OCI-LY7 (cell line): ENCODE measurements at regions of chr4 and their contacts with region 1.

Region 1: DNA sequence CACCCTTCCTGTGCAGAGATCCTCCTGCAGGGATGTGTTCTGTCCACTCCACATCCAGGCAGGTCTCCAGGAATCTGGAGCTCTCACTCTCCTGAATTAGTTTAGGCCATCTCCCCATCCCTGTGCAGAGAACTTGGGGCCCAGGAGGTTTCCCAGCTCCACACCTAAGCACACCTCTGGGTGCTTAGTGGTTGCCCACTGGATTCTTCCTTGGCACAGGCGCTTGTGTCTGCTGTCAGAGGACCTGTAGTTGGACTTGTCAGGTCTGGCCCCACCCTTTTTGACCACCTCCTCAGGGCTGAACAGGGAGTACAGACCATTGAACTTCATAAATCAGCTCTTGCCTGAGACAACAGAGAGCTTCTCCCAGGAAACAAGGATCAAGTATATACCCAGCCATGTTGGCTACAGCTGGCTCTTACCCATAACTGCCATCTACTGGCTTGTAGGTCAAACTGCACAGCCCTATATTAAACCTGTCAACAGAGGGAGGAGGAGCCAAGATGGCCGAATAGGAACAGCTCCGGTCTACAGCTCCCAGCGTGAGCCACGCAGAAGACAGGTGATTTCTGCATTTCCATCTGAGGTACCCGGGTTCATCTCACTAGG is 275.5 kb downstream of the PPARGC1A start:
- DNase-seq: peak; percentile 51
- H3K4me3 ChIP-seq: no peak overlapping the region
- H3K27ac ChIP-seq: no peak overlapping the region
- H3K4me1 ChIP-seq: no peaks in the 10 kb centered on the region
- CTCF ChIP-seq: peak; percentile 61

Region 2: GRCh38 chr4:23135792-23136645 is 478.4 kb before region 1 on chr4:
- CTCF ChIA-PET with region 1: interaction called, 3 read pairs
- POLR2A ChIA-PET with region 1: no interaction called
- intact Hi-C with region 1: loop called (anchors 5 kb)
- DNase-seq: peak; percentile 63
- H3K4me3 ChIP-seq: no peak overlapping the region
- H3K27ac ChIP-seq: no peak overlapping the region
- H3K4me1 ChIP-seq: no peaks in the 10 kb centered on the region
- CTCF ChIP-seq: peak; percentile 92

Region 3: DNA sequence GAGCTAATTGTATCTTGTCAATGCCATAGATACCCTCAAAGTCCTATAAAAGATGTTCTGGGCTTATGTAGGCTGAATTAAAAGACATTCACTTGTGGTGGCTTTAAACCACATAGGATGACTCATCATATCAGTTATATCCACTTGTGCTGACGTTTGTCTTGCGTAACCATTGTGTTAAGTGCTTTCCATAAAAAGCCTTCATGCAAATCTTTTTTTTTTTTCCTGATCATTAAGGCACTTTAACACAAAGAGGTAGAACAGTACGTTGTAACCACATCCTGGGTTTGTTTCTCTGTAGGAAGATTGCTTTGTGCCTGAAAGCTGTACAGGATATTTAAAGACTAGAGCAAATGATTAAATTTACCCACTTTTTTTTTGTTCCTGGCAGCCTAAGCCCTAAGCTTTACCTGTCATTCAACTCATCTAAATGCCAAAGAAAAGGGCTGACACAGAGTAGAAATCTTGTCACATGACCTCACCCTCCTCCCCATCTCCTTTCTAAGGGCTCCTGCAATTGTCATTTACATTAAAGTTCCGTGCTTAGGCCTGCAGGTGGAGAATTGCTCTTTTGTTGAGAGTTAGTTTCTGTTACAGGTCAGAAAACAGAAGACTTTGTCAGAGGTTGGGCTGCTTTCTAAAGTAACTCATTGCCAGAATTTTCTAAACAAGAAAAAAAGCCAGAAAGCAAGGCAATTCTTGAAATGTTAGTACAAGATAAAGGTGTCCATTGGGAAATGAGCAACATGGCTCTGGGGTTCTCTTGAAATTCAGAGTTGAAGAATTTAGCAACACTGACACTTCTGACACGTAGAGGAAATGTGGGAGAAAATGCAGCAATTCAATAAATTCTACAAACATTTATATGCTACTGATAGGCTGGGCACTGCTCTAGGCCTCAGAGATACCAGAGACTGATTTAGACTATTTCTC is 280.2 kb before region 1 on chr4:
- CTCF ChIA-PET with region 1: no interaction called
- POLR2A ChIA-PET with region 1: no interaction called
- intact Hi-C with region 1: loop called (anchors 5 kb)
- DNase-seq: peak; percentile 90
- H3K4me3 ChIP-seq: peak overlapping the region; percentile 36
- H3K27ac ChIP-seq: peak overlapping the region; percentile 91
- H3K4me1 ChIP-seq: peaks cover 61% of the 10 kb centered on the region
- CTCF ChIP-seq: peak; percentile 76